Mammary epithelial cell (primary cell): ENCODE measurements at regions of chr7 and their contacts with region 1.

Region 1: DNA sequence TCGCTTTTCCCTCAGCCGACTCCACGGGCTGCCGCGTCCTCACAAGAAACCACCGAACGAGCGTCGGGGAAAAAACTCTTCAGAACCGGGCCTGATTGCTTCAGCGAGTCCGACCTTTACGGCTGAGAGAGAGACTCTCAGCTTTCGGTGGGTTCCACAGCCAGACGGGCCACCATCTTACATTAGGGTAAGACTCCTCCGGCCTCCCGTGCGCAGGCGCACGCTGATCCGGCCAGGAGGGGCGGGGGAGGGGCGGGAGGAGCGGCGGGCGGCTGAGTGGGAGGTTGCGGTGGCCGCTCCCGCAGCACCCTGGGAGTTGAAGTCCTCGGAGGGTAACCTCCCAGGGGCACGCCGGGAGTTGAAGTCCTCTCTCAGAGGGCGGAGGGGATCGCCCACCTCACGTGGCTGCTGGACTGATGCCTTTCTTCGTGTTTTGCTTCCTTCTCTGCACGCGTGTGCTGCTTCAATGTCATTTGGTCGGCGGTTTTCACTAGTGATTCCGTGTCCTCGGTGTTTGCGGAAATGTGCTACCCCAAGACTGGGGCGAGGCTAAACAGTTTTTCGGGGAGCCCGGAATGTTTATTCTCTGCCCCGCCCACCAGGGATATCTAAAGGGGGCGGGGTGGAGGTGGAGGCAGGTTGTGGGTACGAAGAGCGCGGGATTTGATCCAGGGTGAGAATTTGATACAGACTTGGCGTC is at the start of gene CNOT4:
- DNase-seq: peak; percentile 96
- H3K4me3 ChIP-seq: peak within 1 kb of the TSS; percentile 73 to 91 (median 86)
- H3K27ac ChIP-seq: peak within 1 kb of the TSS; percentile 95
- H3K4me1 ChIP-seq: peaks cover 7% of the 10 kb centered on the region
- H3K27me3 ChIP-seq: no peaks in the 10 kb centered on the region
- CTCF ChIP-seq: no peak
- total RNA-seq, gene CNOT4: 12.7 to 23.1 TPM

Region 2: DNA sequence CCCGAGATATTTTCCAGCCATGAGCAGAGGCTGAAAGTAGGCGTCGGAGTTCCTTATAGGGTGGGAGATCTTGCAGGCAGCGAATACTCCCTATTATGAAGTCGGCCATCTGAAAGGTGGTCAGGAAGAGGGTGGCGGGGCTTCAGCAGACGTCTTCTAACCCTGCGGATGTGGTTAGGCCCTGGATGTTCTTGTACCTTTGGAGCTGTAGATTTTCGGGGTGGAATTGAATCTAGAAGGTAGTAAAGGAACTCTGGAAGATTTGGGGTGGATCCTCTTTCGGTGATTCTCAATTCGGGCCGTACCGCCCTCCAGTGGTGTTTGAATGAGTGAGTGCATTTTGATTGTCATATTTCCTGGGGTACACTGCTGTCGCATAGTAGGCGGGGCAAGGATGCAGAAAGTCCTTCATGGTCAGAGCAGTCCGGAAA is 48.3 kb after region 1 on chr7:
- CTCF ChIA-PET with region 1: no interaction called
- dilution Hi-C with region 1: no loop called
- in situ Hi-C with region 1: no loop called
- intact Hi-C with region 1: loop called (anchors 1 kb)
- DNase-seq: peak; percentile 64
- H3K4me3 ChIP-seq: peak overlapping the region; percentile 76 to 83 (median 79)
- H3K27ac ChIP-seq: peak overlapping the region; percentile 94
- H3K4me1 ChIP-seq: peaks cover 11% of the 10 kb centered on the region
- H3K27me3 ChIP-seq: no peaks in the 10 kb centered on the region
- CTCF ChIP-seq: peak; percentile 39 to 64

Region 3: DNA sequence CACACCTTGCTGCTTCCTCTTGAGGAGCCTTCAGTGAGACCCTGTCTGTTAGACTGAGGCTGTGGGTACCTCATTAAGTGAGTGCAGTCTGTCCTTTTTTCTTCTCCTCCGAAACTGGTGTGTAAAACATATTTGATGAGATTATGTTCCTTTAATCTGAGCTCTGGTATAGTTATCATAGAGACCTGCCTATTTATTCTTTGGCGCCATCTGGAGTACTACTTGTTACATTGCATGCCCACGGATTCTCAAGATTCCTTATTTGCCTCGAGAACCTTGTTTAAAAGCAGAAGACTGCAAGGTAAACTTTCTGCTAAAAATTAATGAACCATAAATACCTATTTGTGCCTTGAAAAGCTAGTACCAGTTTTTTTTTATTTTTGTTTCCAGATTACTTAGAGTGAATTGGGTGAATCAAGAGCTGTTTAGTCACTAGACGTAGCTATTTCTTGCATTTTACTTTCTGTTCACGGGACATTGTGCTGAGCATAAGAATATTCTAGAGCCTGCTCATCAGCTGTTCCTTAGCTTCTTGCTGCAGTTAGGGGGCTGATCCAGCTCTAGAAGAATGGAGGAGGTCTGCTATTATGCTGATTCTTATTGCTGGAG is 135.3 kb after region 1 on chr7:
- CTCF ChIA-PET with region 1: no interaction called
- dilution Hi-C with region 1: no loop called
- in situ Hi-C with region 1: no loop called
- intact Hi-C with region 1: loop called (anchors 2 kb)
- DNase-seq: peak; percentile 26
- H3K4me3 ChIP-seq: no peak overlapping the region
- H3K27ac ChIP-seq: no peak overlapping the region
- H3K4me1 ChIP-seq: no peaks in the 10 kb centered on the region
- H3K27me3 ChIP-seq: no peaks in the 10 kb centered on the region
- CTCF ChIP-seq: peak; percentile 70 to 73